ENCODE measurements at regions of chr1 and their contacts with region 1.

Region 1: GRCh38 chr1:64966158-64966971 is at the start of gene JAK1:
- DNase-seq: peak; percentile 87
- H3K4me3 Mint-ChIP-seq: peak within 1 kb of the TSS; percentile 89
- H3K27ac Mint-ChIP-seq: peak within 1 kb of the TSS; percentile 90
- H3K4me1 Mint-ChIP-seq: peaks cover 46% of the 10 kb centered on the region
- H3K27me3 Mint-ChIP-seq: no peaks in the 10 kb centered on the region
- total RNA-seq, gene JAK1: 139 to 140 TPM

Region 2: GRCh38 chr1:64675718-64676345 is 290.5 kb before region 1 on chr1:
- CTCF ChIA-PET with region 1: no interaction called
- intact Hi-C with region 1: no loop called
- DNase-seq: no peak
- H3K4me3 Mint-ChIP-seq: no peak overlapping the region
- H3K27ac Mint-ChIP-seq: no peak overlapping the region
- H3K4me1 Mint-ChIP-seq: no peaks in the 10 kb centered on the region
- H3K27me3 Mint-ChIP-seq: no peaks in the 10 kb centered on the region

Region 3: GRCh38 chr1:64686828-64687724 is 279.3 kb before region 1 on chr1:
- CTCF ChIA-PET with region 1: no interaction called
- intact Hi-C with region 1: loop called (anchors 5 kb)
- DNase-seq: peak; percentile 39
- H3K4me3 Mint-ChIP-seq: no peak overlapping the region
- H3K27ac Mint-ChIP-seq: no peak overlapping the region
- H3K4me1 Mint-ChIP-seq: peaks cover 5% of the 10 kb centered on the region
- H3K27me3 Mint-ChIP-seq: no peaks in the 10 kb centered on the region

Region 4: DNA sequence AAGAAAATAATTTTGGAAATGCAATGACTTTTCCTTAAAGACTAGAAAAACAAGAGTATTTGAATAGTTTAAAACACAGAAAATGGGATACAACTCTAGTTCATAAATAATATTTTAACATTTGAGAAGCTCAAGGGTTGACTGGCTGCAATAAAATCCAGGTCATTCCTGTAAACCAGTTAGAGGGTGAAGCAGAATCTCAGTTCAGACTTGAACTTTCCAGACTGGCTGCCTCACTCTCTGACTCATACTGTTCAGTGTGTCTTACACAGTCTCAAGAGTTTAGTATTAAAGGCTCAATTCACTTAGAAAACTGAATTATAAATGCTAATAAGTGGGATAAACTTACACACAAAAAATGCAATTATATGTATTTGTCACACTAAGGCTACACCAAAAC is 131.6 kb before region 1 on chr1:
- CTCF ChIA-PET with region 1: no interaction called
- intact Hi-C with region 1: no loop called
- DNase-seq: peak; percentile 23
- H3K4me3 Mint-ChIP-seq: no peak overlapping the region
- H3K27ac Mint-ChIP-seq: no peak overlapping the region
- H3K4me1 Mint-ChIP-seq: peaks cover 16% of the 10 kb centered on the region
- H3K27me3 Mint-ChIP-seq: no peaks in the 10 kb centered on the region

Region 5: DNA sequence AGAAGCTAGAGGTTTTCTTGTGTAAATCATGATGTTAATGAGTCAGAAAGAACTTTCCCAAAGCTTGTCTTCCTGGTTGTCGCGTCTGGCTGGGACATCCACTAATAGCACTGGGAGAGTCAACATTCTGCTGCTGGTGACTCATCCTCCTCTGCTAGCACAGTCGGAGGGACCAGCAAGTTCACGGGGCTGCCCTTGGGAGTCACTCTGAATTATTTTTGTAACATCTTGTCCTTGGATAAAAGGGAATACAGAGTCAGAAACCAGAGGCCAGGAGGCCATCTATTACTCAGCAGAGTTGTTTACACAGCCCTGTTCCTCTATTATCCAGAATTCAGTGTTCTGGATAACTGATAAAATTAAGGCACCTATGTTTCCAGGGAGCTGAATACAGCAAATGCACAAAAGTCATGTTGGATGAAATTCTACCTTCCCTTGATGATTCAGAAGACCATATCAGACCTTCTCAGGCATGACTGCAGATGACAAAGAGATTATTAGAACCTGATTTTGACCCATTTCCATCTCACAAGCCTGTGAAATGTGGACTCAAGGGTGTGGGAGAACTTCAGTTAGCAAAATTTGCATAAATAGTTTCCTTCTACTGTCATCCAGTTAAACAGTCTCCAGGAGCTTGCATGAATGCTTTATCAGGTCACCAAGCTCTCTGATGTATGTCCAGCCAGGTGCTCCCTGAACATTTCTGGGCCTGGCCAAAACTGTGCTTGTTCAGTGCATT is 68.1 kb before region 1 on chr1:
- CTCF ChIA-PET with region 1: no interaction called
- intact Hi-C with region 1: loop called (anchors 1 kb)
- DNase-seq: peak; percentile 68
- H3K4me3 Mint-ChIP-seq: no peak overlapping the region
- H3K27ac Mint-ChIP-seq: no peak overlapping the region
- H3K4me1 Mint-ChIP-seq: peaks cover 92% of the 10 kb centered on the region
- H3K27me3 Mint-ChIP-seq: no peaks in the 10 kb centered on the region

Region 6: GRCh38 chr1:64948905-64949833 is 17.2 kb before region 1 on chr1:
- CTCF ChIA-PET with region 1: no interaction called
- intact Hi-C with region 1: loop called (anchors 1 kb)
- DNase-seq: peak; percentile 83
- H3K4me3 Mint-ChIP-seq: peak overlapping the region; percentile 53
- H3K27ac Mint-ChIP-seq: peak overlapping the region; percentile 94
- H3K4me1 Mint-ChIP-seq: peaks cover 79% of the 10 kb centered on the region
- H3K27me3 Mint-ChIP-seq: no peaks in the 10 kb centered on the region

Region 7: DNA sequence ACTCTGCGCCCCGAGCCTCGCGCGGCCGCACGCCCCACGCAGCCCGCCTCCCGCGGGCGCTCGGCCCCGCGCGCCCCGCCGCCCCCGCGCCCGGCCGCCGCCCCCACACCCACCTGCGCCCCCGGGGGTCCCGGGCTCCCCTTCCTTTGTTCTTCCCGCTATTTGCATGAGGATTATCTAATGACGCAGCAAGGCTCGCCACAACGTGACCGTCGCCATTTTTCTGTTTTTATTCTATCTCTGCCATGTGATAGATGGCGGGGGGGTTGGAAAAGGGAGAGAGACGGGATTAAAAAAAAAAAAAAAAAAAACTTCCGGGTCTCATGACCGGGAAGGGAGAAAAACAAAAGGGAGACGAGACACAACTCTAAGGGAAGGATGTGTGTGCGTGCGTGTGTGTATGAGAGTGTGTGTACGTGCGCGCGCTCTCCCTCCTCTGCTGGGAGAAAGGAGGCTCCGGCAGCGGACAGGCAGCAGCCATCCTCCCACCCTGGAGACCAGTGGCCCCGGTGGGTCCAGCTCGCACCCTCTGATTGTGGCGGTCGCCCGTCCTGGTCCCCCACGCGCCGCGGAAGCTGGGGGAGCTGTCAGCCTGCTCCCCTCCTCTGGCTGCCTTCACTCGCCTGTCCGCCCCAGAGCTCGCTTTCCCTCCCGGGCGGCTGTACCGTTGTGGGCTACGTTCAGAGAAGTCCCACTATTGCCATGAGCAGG is 101.3 kb after region 1 on chr1:
- CTCF ChIA-PET with region 1: no interaction called
- intact Hi-C with region 1: loop called (anchors 1 kb)
- DNase-seq: peak; percentile 71
- H3K4me3 Mint-ChIP-seq: peak overlapping the region; percentile 87
- H3K27ac Mint-ChIP-seq: peak overlapping the region; percentile 95
- H3K4me1 Mint-ChIP-seq: peaks cover 51% of the 10 kb centered on the region
- H3K27me3 Mint-ChIP-seq: no peaks in the 10 kb centered on the region

Region 8: GRCh38 chr1:65419681-65420589 is 453.6 kb after region 1 on chr1:
- CTCF ChIA-PET with region 1: no interaction called
- intact Hi-C with region 1: loop called (anchors 2 kb)
- DNase-seq: peak; percentile 99
- H3K4me3 Mint-ChIP-seq: no peak overlapping the region
- H3K27ac Mint-ChIP-seq: peak overlapping the region; percentile 89
- H3K4me1 Mint-ChIP-seq: peaks cover 20% of the 10 kb centered on the region
- H3K27me3 Mint-ChIP-seq: no peaks in the 10 kb centered on the region

Region 9: GRCh38 chr1:65658122-65658521 is 691.8 kb after region 1 on chr1:
- CTCF ChIA-PET with region 1: no interaction called
- intact Hi-C with region 1: no loop called
- DNase-seq: no peak
- H3K4me3 Mint-ChIP-seq: no peak overlapping the region
- H3K27ac Mint-ChIP-seq: no peak overlapping the region
- H3K4me1 Mint-ChIP-seq: no peaks in the 10 kb centered on the region
- H3K27me3 Mint-ChIP-seq: peaks cover 6% of the 10 kb centered on the region